ENCODE measurements at regions of chr9 and their contacts with region 1.

Region 1: DNA sequence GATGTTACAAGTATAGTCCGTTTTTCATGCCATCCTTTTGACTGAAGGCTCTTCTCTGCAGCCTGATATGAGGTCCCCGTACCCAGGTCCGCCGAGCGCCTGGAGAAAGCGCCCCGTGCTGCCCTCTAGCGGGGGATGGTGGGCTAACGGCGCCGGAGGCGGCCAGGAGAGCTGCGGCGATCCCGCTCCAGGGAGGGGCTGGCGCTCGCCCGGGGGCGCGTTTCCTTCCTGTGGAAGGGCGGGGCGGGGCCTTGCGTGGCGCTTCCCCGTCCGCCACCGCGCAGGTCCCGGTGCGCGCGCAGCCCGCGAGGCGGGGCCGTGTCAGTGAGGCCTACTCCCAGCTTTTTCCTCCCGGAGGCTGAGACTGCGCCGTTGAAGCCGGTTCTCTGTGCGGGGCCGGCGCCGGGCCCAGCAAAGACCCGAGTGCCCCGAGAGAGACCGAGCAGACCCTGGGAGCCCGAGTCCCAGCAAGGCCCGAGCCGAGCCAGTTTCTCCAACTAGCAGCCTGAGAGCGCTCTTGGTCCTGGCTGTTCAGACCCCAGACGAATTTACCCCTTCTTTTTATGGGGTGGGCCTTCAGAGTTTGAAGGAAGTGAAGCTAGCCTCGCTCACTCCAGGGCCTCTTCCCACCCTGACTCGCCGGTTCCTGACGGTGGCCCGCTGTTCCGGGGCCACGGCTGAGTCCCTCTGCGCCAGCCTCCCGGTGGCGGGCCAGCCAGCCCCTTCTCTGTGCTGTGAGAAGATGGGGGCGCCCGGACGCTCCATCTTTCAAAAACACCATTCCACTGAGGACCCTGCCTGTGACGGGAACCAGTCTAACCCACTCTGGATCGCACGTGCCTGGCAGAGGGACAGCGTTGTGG is 9.7 kb upstream of the PHF2 start:
- DNase-seq: peak; percentile 100
- H3K4me3 Mint-ChIP-seq: peak overlapping the region; percentile 89
- H3K27ac Mint-ChIP-seq: peak overlapping the region; percentile 93
- H3K4me1 Mint-ChIP-seq: peaks cover 20% of the 10 kb centered on the region
- H3K27me3 Mint-ChIP-seq: no peaks in the 10 kb centered on the region

Region 2: GRCh38 chr9:93134015-93134739 is 432.5 kb before region 1 on chr9 and contains the start of gene NINJ1:
- intact Hi-C with region 1: loop called (anchors 1 kb)
- DNase-seq: peak; percentile 97
- H3K4me3 Mint-ChIP-seq: peak within 1 kb of the TSS; percentile 93
- H3K27ac Mint-ChIP-seq: peak within 1 kb of the TSS; percentile 97
- H3K4me1 Mint-ChIP-seq: peaks cover 60% of the 10 kb centered on the region
- H3K27me3 Mint-ChIP-seq: no peaks in the 10 kb centered on the region
- total RNA-seq, gene NINJ1: 103 and 110 TPM in 2 replicates